K562 (cell line): ENCODE measurements at regions of chr6 and their contacts with region 1.

Region 1: GRCh38 chr6:155483858-155484257 is 28.2 kb upstream of the NOX3 start:
- DNase-seq: no peak
- ATAC-seq: no peak
- H3K4me3 ChIP-seq: no peak overlapping the region
- H3K27ac ChIP-seq: no peak overlapping the region
- H3K4me1 ChIP-seq: no peaks in the 10 kb centered on the region
- H3K27me3 ChIP-seq: no peaks in the 10 kb centered on the region
- CTCF ChIP-seq: no peak
- EP300 ChIP-seq: no peak
- POLR2A ChIP-seq: no peak
- RAD21 ChIP-seq: no peak

Region 2: DNA sequence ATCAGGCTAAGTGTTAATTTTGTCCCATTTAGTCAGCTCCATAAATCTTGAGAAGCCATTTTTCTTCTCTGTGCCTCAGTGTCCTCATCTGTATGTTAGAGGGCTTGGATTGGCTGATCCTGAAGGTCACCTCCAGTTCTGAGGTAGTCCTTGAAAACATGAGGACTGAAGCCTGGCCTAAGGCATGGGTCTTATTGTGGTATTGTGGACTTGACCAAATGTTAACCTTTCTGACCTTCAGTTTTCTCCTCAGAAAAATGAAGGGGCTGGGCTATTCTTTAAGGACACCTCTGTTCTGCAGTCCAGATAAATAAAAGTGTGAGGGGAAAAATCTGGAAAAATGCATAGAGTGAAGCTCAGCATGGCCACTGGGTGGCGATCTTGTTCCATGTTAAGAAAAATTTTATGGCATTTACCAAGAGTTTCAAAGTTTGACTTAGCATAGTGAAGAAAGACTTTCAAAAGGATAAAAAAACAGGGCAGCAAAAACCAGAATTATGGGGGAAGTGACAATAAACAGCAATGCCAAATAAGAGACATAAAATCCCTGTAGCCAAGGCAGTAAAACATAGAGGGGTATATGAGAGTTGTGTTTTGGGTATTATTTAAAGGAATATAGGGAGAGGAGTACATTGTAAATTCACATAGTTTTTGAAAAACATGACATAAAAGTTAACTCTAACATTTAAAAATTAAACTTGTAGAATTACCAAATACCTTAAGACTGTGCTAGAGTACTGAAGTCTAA is 156.4 kb before region 1 on chr6:
- CTCF ChIA-PET with region 1: no interaction called
- POLR2A ChIA-PET with region 1: no interaction called
- in situ Hi-C with region 1: no loop called
- intact Hi-C with region 1: no loop called
- DNase-seq: peak; percentile 30 to 75 (median 46)
- ATAC-seq: peak; percentile 85
- H3K4me3 ChIP-seq: no peak overlapping the region
- H3K27ac ChIP-seq: no peak overlapping the region
- H3K4me1 ChIP-seq: no peaks in the 10 kb centered on the region; a peak in 1 of 5 replicates
- H3K27me3 ChIP-seq: peaks cover 2 to 5% of the 10 kb centered on the region in 2 experiments; a peak in 3 of 5 replicates
- CTCF ChIP-seq: peak; percentile 54 to 93 (median 79)
- EP300 ChIP-seq: no peak
- POLR2A ChIP-seq: no peak
- RAD21 ChIP-seq: peak; percentile 90 to 91

Region 3: DNA sequence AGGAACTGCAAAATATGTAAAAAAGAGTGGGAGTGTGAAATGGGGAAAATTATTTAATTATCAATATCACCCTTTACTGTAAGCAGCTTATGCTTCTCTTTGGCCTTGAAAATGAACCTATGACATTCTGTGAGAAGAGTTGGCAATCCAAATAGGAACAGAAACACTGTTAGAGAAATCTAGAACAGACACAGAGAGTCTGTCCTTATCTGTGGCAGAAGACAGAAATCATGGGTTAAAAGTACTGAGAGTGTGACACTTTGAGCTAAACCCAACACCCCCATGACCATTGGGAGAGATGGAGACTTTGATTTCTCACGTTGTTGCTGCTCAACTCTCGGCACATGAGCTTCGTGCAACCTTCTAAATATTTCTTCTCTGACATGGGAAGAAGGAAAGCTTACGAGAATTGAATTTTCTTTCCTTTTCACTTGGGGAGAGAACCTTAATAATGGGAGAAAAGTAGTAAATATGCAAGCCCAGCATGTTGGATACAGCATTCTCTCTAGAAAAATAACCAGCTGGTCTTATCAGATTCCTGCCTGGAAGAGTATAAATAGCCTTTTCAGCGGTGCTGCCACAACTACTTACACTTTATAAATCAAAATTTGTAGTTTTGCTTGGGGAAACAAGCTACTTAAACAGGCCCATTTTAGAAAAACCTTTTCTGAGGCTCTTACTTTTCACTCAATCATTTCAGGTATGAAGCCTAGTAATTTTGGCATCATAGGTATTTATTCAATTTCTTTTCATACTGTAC is 21.2 kb after region 1 on chr6:
- CTCF ChIA-PET with region 1: no interaction called
- POLR2A ChIA-PET with region 1: no interaction called
- in situ Hi-C with region 1: no loop called
- intact Hi-C with region 1: loop called (anchors 1 kb)
- DNase-seq: no peak
- ATAC-seq: no peak
- H3K4me3 ChIP-seq: no peak overlapping the region
- H3K27ac ChIP-seq: no peak overlapping the region
- H3K4me1 ChIP-seq: no peaks in the 10 kb centered on the region
- H3K27me3 ChIP-seq: no peaks in the 10 kb centered on the region
- CTCF ChIP-seq: no peak
- EP300 ChIP-seq: no peak
- POLR2A ChIP-seq: no peak
- RAD21 ChIP-seq: no peak